CD8-positive, alpha-beta T cell (primary cell): ENCODE measurements at regions of chr16 and their contacts with region 1.

Region 1: DNA sequence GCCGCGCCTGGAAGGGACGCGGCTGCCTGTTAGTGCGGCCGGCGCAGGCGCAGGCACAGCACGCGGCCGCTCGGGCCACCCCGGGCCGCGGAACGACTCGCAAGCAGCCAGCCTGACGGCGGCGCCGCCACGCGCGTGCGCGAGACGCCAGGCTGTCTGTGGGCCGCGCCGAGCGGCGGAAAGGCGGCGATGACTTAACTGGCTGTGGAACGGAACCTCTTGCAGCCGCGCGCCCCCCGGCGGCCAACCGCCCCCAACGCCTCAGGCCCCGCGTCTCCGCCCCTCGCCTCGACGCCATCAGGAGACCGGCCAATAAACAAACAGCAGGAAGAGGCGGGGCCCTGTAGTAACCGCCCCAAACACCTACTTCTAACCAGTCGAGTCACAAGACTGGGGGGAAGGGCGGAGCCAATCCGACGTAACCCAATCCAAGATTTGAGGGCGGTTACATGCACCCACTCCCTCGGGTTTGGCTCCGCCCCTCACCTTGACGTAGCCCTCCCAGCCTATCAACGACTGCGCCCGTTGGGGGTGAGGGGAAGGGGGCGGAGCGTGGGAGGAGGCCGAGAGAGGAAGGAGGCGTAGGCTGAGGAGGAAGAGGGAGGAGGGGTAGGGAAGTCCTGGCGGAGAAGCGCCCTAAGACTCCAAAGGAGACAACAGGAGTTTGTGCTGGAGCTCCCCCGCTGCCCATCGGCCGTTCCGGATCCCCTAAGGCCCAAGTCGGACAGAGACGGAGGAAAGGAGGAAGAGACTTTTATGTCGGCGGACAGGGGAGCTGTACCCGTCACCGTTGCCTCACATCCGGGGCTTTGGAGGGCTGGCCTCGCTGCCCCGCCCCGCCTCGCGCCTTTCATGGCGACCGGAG is at the start of gene FBRS:
- DNase-seq: peak; percentile 99 to 100 (median 100)
- ATAC-seq: peak; percentile 75
- H3K4me3 ChIP-seq: peak within 1 kb of the TSS; percentile 61 to 91
- H3K4me3 Mint-ChIP-seq: peak within 1 kb of the TSS; percentile 98
- H3K27ac ChIP-seq: peak within 1 kb of the TSS; percentile 97 to 99
- H3K27ac Mint-ChIP-seq: peak within 1 kb of the TSS; percentile 100
- H3K4me1 ChIP-seq: peaks cover 36% of the 10 kb centered on the region
- H3K4me1 Mint-ChIP-seq: peaks cover 39% of the 10 kb centered on the region
- H3K27me3 ChIP-seq: no peaks in the 10 kb centered on the region
- H3K27me3 Mint-ChIP-seq: no peaks in the 10 kb centered on the region
- CTCF ChIP-seq: peak; percentile 66
- total RNA-seq, gene FBRS: 222 to 224 TPM

Region 2: DNA sequence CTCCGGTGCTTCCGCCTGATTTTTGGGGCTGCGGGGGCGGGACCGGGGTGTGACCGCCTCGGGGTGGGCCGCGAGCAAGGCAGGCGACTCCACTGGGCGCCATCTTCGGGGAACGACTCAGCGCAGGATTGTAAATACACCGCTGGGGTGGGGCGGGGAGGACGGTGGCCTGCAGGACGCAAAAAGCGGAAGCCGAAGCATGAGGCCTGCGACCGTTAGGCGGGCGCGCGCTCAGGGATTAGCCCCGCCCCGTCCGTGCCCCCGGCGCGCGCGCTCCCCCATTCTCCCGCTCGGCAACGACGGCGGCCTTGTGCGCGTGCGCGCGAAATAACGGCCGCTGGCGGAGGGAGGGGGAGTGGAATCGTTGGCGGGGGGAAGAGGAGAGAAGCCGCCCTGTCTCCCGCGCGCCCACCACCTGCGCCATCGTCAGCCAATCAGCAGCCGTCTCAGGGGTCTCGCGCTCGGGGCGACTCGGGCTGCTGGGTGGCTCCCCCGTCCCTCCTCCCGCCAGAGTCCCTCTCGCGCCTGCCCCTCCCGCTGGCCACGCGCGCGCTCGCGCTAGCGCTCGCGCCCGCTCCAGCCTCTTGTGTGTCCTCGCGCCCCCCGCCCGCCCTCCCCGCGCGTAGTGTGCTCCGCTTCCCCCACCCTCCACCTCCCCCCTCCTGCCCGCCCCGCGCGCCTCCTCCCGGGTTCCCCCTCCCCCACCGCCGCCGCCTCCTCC is 852.6 kb before region 1 on chr16:
- CTCF ChIA-PET with region 1: no interaction called
- POLR2A ChIA-PET with region 1: no interaction called
- intact Hi-C with region 1: loop called in 1 of 2 experiments (anchors 5 kb)
- DNase-seq: peak; percentile 95 to 99 (median 98)
- ATAC-seq: peak; percentile 60
- H3K4me3 ChIP-seq: peak overlapping the region; percentile 70 to 82
- H3K4me3 Mint-ChIP-seq: peak overlapping the region; percentile 99
- H3K27ac ChIP-seq: peak overlapping the region; percentile 86 to 87
- H3K27ac Mint-ChIP-seq: peak overlapping the region; percentile 100
- H3K4me1 ChIP-seq: peaks cover 42% of the 10 kb centered on the region
- H3K4me1 Mint-ChIP-seq: peaks cover 39% of the 10 kb centered on the region
- H3K27me3 ChIP-seq: no peaks in the 10 kb centered on the region
- H3K27me3 Mint-ChIP-seq: no peaks in the 10 kb centered on the region
- CTCF ChIP-seq: no peak

Region 3: GRCh38 chr16:30370444-30371247 is 287.5 kb before region 1 on chr16 and contains the start of gene TBC1D10B:
- CTCF ChIA-PET with region 1: no interaction called
- POLR2A ChIA-PET with region 1: interaction called, 4 read pairs
- intact Hi-C with region 1: loop called (anchors 1 to 2 kb)
- DNase-seq: peak; percentile 98 to 100 (median 99)
- ATAC-seq: peak; percentile 84
- H3K4me3 ChIP-seq: peak within 1 kb of the TSS; percentile 79 to 83
- H3K4me3 Mint-ChIP-seq: peak within 1 kb of the TSS; percentile 89
- H3K27ac ChIP-seq: peak within 1 kb of the TSS; percentile 36 to 84
- H3K27ac Mint-ChIP-seq: peak within 1 kb of the TSS; percentile 87
- H3K4me1 ChIP-seq: peaks cover 42% of the 10 kb centered on the region
- H3K4me1 Mint-ChIP-seq: peaks cover 54% of the 10 kb centered on the region
- H3K27me3 ChIP-seq: no peaks in the 10 kb centered on the region
- H3K27me3 Mint-ChIP-seq: no peaks in the 10 kb centered on the region
- CTCF ChIP-seq: no peak
- total RNA-seq, gene TBC1D10B: 12.3 to 13.8 TPM

Region 4: DNA sequence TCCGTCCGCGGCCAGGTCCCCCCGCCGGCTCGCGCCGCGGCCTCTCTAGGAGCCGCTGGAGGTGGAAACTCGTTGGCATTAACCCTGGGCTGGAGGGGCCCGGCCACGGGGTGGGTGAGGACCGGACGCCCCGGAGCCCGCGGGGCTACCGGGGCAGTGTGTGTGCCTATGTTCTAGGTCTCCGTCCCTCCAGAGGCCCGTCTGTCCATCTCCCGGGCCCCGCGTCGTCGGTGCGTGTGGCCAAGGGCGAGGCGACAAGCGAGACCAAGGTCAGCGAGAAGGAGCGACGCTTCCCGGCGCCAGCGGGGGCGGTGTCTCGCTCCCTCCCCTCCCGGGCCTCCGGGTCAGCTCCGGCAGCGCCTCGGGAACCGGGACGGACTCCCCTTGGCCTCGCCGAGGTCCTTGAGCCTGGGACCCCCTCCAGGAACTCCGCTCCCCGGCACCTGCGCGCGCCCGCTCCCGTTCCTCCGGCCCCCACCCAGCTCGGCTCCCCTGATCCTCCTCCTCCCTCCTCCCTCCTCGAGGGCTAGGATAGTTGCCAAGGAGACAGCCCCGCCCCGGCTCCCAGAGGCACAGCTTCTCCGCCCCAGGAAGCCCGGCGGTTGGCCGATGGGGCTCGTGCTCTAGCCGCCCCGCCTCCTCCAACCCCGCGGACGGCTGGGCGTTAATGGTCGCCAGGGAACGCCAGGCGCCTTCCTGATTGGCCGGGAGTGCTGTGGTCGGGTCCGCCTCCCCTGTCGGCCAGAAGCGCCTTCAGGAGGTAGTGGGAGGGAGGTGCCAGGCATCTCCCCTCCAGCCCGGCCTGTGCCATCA is 131.1 kb before region 1 on chr16:
- CTCF ChIA-PET with region 1: interaction called, 3 read pairs
- POLR2A ChIA-PET with region 1: no interaction called
- intact Hi-C with region 1: loop called (anchors 2 kb)
- DNase-seq: peak; percentile 53 to 92 (median 86)
- ATAC-seq: peak; percentile 75
- H3K4me3 ChIP-seq: peak overlapping the region; percentile 74 to 75
- H3K4me3 Mint-ChIP-seq: peak overlapping the region; percentile 87
- H3K27ac ChIP-seq: peak overlapping the region; percentile 59 to 69
- H3K27ac Mint-ChIP-seq: peak overlapping the region; percentile 90
- H3K4me1 ChIP-seq: peaks cover 12% of the 10 kb centered on the region
- H3K4me1 Mint-ChIP-seq: peaks cover 24% of the 10 kb centered on the region
- H3K27me3 ChIP-seq: no peaks in the 10 kb centered on the region
- H3K27me3 Mint-ChIP-seq: no peaks in the 10 kb centered on the region
- CTCF ChIP-seq: no peak

Region 5: DNA sequence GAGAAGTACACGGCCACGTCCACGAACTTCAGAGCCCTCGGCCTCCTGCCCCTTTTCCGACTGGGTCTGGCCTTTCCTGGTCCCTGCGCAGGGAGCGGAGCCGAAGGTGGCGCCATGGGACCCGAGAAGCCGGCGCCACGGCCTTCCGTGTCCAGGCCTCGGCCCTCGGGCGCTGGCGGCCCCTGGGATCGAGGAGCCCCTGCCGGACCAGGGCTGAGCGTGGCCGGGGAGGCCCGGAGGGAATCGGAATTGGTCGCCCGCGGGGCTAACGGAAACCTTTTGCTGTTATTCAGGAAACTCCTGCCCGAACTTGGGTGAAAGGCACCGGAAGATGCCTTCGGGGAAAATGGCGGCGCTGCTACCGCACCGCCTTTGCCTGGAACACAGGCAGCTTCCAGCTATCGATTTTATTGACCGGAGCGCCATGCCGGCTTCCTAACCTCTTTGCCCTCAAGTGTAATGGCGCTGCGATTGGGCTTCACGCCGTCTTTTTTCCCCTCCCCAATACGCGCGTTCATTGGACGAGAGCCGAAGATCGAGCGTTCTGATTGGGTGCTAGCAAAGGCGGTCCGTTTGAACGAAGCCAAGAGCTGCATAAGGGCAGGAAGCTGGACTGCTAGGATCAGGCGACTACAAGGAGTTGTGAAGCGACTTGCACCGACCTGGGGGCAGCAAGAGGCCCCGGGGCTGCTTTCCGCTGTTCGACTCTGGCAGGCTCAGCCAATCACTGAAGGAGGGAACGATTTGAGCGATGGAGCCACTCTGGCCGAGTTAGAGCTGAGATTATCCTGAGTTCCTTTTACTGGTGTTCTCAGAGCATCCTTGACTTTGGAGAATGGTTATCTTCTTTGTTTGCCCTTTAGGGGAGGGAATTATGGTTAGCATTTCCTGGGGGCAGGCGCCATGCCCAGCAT is 47.9 kb before region 1 on chr16 and contains the start of gene ZNF689:
- CTCF ChIA-PET with region 1: interaction called, 3 read pairs
- POLR2A ChIA-PET with region 1: interaction called, 3 read pairs
- intact Hi-C with region 1: loop called (anchors 1 to 2 kb)
- DNase-seq: peak; percentile 90 to 98 (median 94)
- ATAC-seq: peak; percentile 88
- H3K4me3 ChIP-seq: peak within 1 kb of the TSS; percentile 69 to 93
- H3K4me3 Mint-ChIP-seq: peak within 1 kb of the TSS; percentile 95
- H3K27ac ChIP-seq: peak within 1 kb of the TSS; percentile 91 to 93
- H3K27ac Mint-ChIP-seq: peak within 1 kb of the TSS; percentile 98
- H3K4me1 ChIP-seq: peaks cover 12% of the 10 kb centered on the region
- H3K4me1 Mint-ChIP-seq: peaks cover 24% of the 10 kb centered on the region
- H3K27me3 ChIP-seq: peaks cover 0 to 2% of the 10 kb centered on the region in 2 experiments
- H3K27me3 Mint-ChIP-seq: no peaks in the 10 kb centered on the region
- CTCF ChIP-seq: no peak
- total RNA-seq, gene ZNF689: 15.6 to 17.5 TPM

Region 6: GRCh38 chr16:30813821-30814189 is 155.7 kb after region 1 on chr16:
- CTCF ChIA-PET with region 1: no interaction called
- POLR2A ChIA-PET with region 1: no interaction called
- intact Hi-C with region 1: loop called in 1 of 2 experiments (anchors 5 kb)
- DNase-seq: no peak
- ATAC-seq: peak; percentile 2
- H3K4me3 ChIP-seq: peak overlapping the region; percentile 49 to 56
- H3K4me3 Mint-ChIP-seq: peak overlapping the region; percentile 82
- H3K27ac ChIP-seq: peak overlapping the region; percentile 72
- H3K27ac Mint-ChIP-seq: peak overlapping the region; percentile 88
- H3K4me1 ChIP-seq: peaks cover 18% of the 10 kb centered on the region
- H3K4me1 Mint-ChIP-seq: peaks cover 9% of the 10 kb centered on the region
- H3K27me3 ChIP-seq: no peaks in the 10 kb centered on the region
- H3K27me3 Mint-ChIP-seq: no peaks in the 10 kb centered on the region
- CTCF ChIP-seq: no peak